Activated CD8-positive, alpha-beta memory T cell treated with anti-CD3 and anti-CD28 coated beads, Interleukin-2, amount 10 ng/mL, durations not matched to agents 7 days and 5 days (primary cell): ENCODE measurements at regions of chr2 and their contacts with region 1.

Region 1: GRCh38 chr2:113138428-113139322 is 11.3 kb downstream of the IL1RN start:
- DNase-seq: peak; percentile 67
- ATAC-seq: peak; percentile 81
- H3K4me3 Mint-ChIP-seq: peak overlapping the region; percentile 21
- H3K27ac Mint-ChIP-seq: peak overlapping the region; percentile 72
- H3K4me1 Mint-ChIP-seq: peaks cover 27% of the 10 kb centered on the region
- H3K27me3 Mint-ChIP-seq: no peaks in the 10 kb centered on the region

Region 2: GRCh38 chr2:112967023-112967422 is 171.7 kb before region 1 on chr2:
- CTCF ChIA-PET with region 1: no interaction called
- DNase-seq: no peak
- ATAC-seq: no peak
- H3K4me3 Mint-ChIP-seq: no peak overlapping the region
- H3K27ac Mint-ChIP-seq: no peak overlapping the region
- H3K4me1 Mint-ChIP-seq: peaks cover 4% of the 10 kb centered on the region
- H3K27me3 Mint-ChIP-seq: peaks cover 22% of the 10 kb centered on the region

Region 3: GRCh38 chr2:113068718-113069435 is 69.8 kb before region 1 on chr2:
- CTCF ChIA-PET with region 1: no interaction called
- DNase-seq: no peak
- ATAC-seq: no peak
- H3K4me3 Mint-ChIP-seq: no peak overlapping the region
- H3K27ac Mint-ChIP-seq: no peak overlapping the region
- H3K4me1 Mint-ChIP-seq: no peaks in the 10 kb centered on the region
- H3K27me3 Mint-ChIP-seq: peaks cover 25% of the 10 kb centered on the region

Region 4: GRCh38 chr2:113080134-113080533 is 58.5 kb before region 1 on chr2:
- CTCF ChIA-PET with region 1: interaction called, 182 read pairs
- DNase-seq: peak; percentile 68
- ATAC-seq: peak; percentile 74
- H3K4me3 Mint-ChIP-seq: no peak overlapping the region
- H3K27ac Mint-ChIP-seq: no peak overlapping the region
- H3K4me1 Mint-ChIP-seq: peaks cover 13% of the 10 kb centered on the region
- H3K27me3 Mint-ChIP-seq: peaks cover 5% of the 10 kb centered on the region

Region 5: GRCh38 chr2:113124181-113124961 is 14.3 kb before region 1 on chr2:
- CTCF ChIA-PET with region 1: interaction called, 24 read pairs
- DNase-seq: peak; percentile 58
- ATAC-seq: peak; percentile 58
- H3K4me3 Mint-ChIP-seq: peak overlapping the region; percentile 26
- H3K27ac Mint-ChIP-seq: peak overlapping the region; percentile 68
- H3K4me1 Mint-ChIP-seq: peaks cover 41% of the 10 kb centered on the region
- H3K27me3 Mint-ChIP-seq: no peaks in the 10 kb centered on the region

Region 6: GRCh38 chr2:113173542-113174395 is 35.1 kb after region 1 on chr2 and contains the start of gene PSD4:
- CTCF ChIA-PET with region 1: interaction called, 107 read pairs
- DNase-seq: peak; percentile 97
- ATAC-seq: peak; percentile 73
- H3K4me3 Mint-ChIP-seq: peak within 1 kb of the TSS; percentile 89
- H3K27ac Mint-ChIP-seq: peak within 1 kb of the TSS; percentile 93
- H3K4me1 Mint-ChIP-seq: peaks cover 69% of the 10 kb centered on the region
- H3K27me3 Mint-ChIP-seq: peaks cover 3% of the 10 kb centered on the region
- total RNA-seq, gene PSD4: 314 to 388 TPM

Region 7: GRCh38 chr2:113203901-113204519 is 65.3 kb after region 1 on chr2:
- CTCF ChIA-PET with region 1: interaction called, 329 read pairs
- DNase-seq: peak; percentile 84
- ATAC-seq: peak; percentile 80
- H3K4me3 Mint-ChIP-seq: no peak overlapping the region
- H3K27ac Mint-ChIP-seq: peak overlapping the region; percentile 25
- H3K4me1 Mint-ChIP-seq: peaks cover 18% of the 10 kb centered on the region
- H3K27me3 Mint-ChIP-seq: no peaks in the 10 kb centered on the region

Region 8: DNA sequence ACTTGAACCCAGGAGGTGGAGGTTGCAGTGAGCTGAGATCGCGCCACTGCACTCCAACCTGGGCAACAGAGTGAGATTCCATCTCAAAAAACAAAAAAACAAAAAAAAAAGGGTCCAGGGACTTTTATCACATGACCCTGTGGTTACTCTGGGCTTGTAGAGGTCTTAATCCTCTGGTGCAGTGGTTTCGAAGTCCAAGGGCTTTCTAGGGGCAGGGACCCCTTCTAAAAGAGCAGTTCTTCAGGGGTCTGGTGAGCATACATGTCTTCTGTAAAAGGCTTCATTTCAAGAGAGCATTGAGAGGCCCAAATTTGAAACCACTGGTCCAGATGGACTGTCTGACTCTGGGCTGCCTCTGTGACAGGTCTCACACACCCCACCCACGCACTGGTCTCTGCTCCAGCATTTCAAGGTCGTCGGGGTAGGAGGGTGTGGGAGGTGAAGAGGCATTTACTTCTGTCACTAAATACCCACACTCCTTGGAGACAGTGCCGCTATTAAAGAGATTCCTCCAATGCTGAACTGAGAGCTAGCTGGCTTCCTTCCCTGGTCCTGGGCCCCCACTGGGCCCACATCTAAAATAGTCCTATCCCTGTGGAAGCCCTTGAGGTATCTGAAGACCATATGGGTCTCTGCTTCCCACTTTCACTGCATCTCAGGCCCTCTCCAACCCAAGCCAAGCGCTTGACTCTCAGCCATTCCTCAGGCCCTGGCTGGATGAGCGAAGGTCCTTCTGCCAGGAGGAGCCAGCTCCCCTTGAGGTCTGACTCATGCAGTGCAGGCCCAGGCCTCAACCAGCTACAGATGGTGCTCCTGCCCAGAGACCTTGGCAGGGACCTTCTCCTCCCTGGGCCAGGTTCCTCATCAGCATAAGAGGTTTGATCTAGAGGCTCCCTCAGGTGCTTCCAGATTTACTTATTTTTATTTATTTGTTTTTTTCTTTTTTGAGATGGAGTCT is 95.2 kb after region 1 on chr2:
- CTCF ChIA-PET with region 1: interaction called, 20 read pairs
- DNase-seq: no peak
- ATAC-seq: no peak
- H3K4me3 Mint-ChIP-seq: no peak overlapping the region
- H3K27ac Mint-ChIP-seq: no peak overlapping the region
- H3K4me1 Mint-ChIP-seq: peaks cover 46% of the 10 kb centered on the region
- H3K27me3 Mint-ChIP-seq: peaks cover 2% of the 10 kb centered on the region

Region 9: DNA sequence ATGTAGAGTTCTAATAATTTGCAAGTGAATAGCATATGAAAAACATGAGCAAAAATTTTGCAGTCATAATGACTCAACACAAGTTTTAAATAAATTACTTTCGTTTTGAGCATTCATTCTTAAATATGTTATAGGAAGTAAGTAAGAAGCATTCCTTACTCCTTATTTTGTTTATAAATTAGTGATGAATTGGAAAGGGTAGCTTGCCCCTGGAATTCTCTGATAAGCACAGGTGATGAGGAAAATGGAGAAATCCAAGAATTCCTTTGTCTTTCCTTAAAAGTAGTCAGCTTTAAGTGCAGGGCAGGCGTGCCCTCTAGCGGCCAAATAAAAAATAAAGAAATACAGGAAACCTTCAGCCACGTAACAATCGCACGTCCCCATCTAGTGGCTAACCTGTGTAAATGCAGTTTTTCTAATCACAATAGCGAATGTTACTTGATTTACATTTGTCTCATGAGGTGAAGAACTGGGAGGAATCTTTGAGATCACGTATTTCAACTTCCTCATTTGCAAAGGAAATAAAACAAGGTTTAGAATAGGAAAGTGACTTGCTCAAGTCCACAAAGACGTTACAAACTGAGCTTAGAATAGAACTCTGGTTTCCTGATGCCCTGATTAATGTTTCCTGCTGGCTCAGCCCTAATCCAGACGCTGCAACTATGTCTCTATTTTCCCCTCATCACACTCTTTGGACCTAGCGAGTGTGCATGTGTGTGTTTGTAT is 251.6 kb after region 1 on chr2:
- CTCF ChIA-PET with region 1: interaction called, 35 read pairs
- DNase-seq: peak; percentile 74
- ATAC-seq: peak; percentile 92
- H3K4me3 Mint-ChIP-seq: peak overlapping the region; percentile 62
- H3K27ac Mint-ChIP-seq: peak overlapping the region; percentile 74
- H3K4me1 Mint-ChIP-seq: peaks cover 13% of the 10 kb centered on the region
- H3K27me3 Mint-ChIP-seq: peaks cover 26% of the 10 kb centered on the region